ENCODE measurements at regions of chr9 and their contacts with region 1.

Region 1: GRCh38 chr9:104104360-104104759 is 10.3 kb downstream of the SMC2 start:
- DNase-seq: no peak
- H3K4me3 ChIP-seq: no peak overlapping the region
- H3K27ac ChIP-seq: no peak overlapping the region
- H3K4me1 ChIP-seq: no peaks in the 10 kb centered on the region
- CTCF ChIP-seq: no peak

Region 2: DNA sequence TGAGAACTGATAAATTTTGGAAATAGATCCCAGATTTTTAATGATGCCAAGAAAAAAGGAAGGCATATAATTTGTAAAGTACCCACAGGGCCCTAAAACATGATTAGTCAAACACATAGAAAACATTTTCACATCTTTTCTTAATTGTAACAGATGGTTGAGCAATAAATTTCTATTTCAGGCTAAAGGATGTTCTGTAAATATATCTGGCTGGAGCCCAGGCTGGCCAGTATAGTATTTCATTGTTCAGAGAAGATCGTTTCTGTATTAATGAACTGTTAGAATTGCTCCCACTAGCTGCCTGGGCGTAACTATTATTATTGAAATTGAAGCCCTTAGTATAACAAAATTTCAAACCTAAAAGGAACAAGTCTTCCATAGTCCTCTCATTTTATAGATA is 115.5 kb before region 1 on chr9:
- CTCF ChIA-PET with region 1: no interaction called
- POLR2A ChIA-PET with region 1: no interaction called
- intact Hi-C with region 1: no loop called
- DNase-seq: no peak
- H3K4me3 ChIP-seq: no peak overlapping the region
- H3K27ac ChIP-seq: no peak overlapping the region
- H3K4me1 ChIP-seq: no peaks in the 10 kb centered on the region
- CTCF ChIP-seq: no peak

Region 3: GRCh38 chr9:104093647-104094533 is 10.5 kb before region 1 on chr9 and contains the start of gene SMC2:
- CTCF ChIA-PET with region 1: interaction called, 3 read pairs
- POLR2A ChIA-PET with region 1: interaction called, 16 read pairs
- intact Hi-C with region 1: no loop called
- DNase-seq: peak; percentile 93
- H3K4me3 ChIP-seq: peak within 1 kb of the TSS; percentile 85
- H3K27ac ChIP-seq: peak within 1 kb of the TSS; percentile 82
- H3K4me1 ChIP-seq: peaks cover 52% of the 10 kb centered on the region
- CTCF ChIP-seq: no peak
- total RNA-seq, gene SMC2: 56.4 and 76.6 TPM in 2 replicates

Region 4: GRCh38 chr9:104118916-104119315 is 14.6 kb after region 1 on chr9:
- CTCF ChIA-PET with region 1: no interaction called
- POLR2A ChIA-PET with region 1: interaction called, 12 read pairs
- intact Hi-C with region 1: loop called (anchors 1 kb)
- DNase-seq: no peak
- H3K4me3 ChIP-seq: no peak overlapping the region
- H3K27ac ChIP-seq: no peak overlapping the region
- H3K4me1 ChIP-seq: no peaks in the 10 kb centered on the region
- CTCF ChIP-seq: no peak